ENCODE measurements at regions of chr12 and their contacts with region 1.

Region 1: GRCh38 chr12:21324551-21324950 is 10.2 kb downstream of the SLCO1A2 start:
- DNase-seq: no peak
- H3K4me3 ChIP-seq: no peak overlapping the region
- CTCF ChIP-seq: no peak

Region 2: DNA sequence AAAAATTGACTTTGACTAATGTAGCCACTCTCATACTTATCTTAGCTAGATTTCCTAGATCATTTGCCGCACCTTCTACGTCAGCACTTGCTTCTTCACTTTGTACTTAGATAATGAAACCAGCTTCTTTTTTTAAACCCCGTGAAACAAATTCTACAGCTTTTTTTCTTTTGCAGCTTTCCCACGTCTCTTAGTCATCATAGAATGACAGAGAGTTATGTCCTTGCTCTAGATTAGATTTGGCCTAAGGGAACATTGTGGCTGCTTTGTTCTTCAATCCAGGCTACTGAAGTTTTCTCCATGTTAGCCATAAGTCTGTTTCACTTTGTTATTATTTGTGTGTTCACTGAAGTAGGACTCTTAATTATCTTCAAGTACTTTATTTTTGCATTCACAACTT is 84.7 kb before region 1 on chr12:
- in situ Hi-C with region 1: loop called (anchors 5 kb)
- DNase-seq: no peak
- H3K4me3 ChIP-seq: no peak overlapping the region
- CTCF ChIP-seq: no peak